ENCODE measurements at regions of chr3 and their contacts with region 1.

Region 1: DNA sequence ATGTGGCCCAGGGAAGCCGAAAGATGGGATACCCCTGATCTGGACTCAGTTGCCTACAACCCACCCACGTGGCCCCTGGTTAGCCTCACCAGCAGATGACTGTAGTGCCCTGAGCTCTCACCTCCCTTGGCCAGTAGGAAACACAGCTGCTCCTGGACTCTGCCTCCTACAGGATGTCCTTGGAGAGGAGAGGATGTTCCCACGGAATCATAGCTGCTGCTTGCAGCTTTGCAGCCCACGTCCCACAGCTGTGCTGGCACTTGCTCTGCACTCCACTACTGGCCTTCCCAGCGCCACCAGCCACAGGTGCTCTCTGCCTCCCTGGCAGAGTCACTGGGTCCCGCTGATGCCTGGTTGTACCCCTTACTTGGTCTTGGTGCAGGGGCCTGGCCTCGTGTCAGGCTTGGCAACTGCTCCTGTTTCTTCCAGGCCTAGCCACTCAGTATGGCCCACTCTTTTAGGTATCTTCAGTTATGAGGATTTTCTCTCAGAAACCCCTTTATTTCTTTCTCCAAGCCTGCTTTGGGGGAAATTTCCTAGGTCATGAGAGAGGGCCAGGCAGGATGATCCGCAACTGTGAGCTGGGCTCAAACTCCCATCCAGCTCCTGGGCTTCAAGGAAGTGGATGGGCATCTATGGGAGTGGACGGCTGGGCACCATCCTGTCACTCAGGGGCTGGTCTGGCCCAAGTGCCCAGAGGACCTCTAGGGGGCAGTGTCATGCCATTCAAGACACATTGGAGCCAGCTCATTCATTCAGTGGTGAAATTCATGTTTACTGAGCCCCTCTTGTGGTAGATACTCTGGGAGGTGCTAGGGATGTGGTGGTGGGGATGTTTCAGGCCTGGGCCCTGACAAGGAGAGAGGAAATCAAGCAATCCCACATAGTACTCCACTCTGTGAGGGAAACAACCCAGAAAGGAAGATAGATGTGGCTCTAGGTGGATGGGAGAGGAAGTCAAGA is 16.2 kb upstream of the VILL start:
- DNase-seq: no peak
- ATAC-seq: peak; percentile 99
- H3K4me3 ChIP-seq: no peak overlapping the region
- H3K27ac ChIP-seq: no peak overlapping the region
- H3K4me1 ChIP-seq: no peaks in the 10 kb centered on the region
- H3K27me3 ChIP-seq: no peaks in the 10 kb centered on the region
- CTCF ChIP-seq: peak; percentile 88 to 92 (median 90); a peak in 5 of 6 replicates
- EP300 ChIP-seq: no peak
- POLR2A ChIP-seq: no peak
- RAD21 ChIP-seq: peak; percentile 69

Region 2: GRCh38 chr3:37855363-37855970 is 118.9 kb before region 1 on chr3:
- CTCF ChIA-PET with region 1: interaction called, 16 read pairs
- POLR2A ChIA-PET with region 1: no interaction called
- RAD21 ChIA-PET with region 1: interaction called, 4 read pairs
- SMC1A ChIA-PET with region 1: interaction called, 8 read pairs
- in situ Hi-C with region 1: no loop called
- intact Hi-C with region 1: no loop called
- DNase-seq: peak; percentile 5
- ATAC-seq: peak; percentile 91
- H3K4me3 ChIP-seq: no peak overlapping the region
- H3K27ac ChIP-seq: no peak overlapping the region
- H3K4me1 ChIP-seq: no peaks in the 10 kb centered on the region
- H3K27me3 ChIP-seq: peaks cover 0 to 4% of the 10 kb centered on the region in 2 experiments; a peak in 2 of 4 replicates
- CTCF ChIP-seq: peak; percentile 89 to 98 (median 89)
- EP300 ChIP-seq: no peak
- POLR2A ChIP-seq: no peak
- RAD21 ChIP-seq: peak; percentile 94

Region 3: GRCh38 chr3:37986479-37987314 is 12.3 kb after region 1 on chr3:
- CTCF ChIA-PET with region 1: interaction called, 12 read pairs
- POLR2A ChIA-PET with region 1: no interaction called
- RAD21 ChIA-PET with region 1: no interaction called
- SMC1A ChIA-PET with region 1: interaction called, 5 read pairs
- in situ Hi-C with region 1: no loop called
- intact Hi-C with region 1: no loop called
- DNase-seq: no peak
- ATAC-seq: no peak
- H3K4me3 ChIP-seq: no peak overlapping the region
- H3K27ac ChIP-seq: no peak overlapping the region
- H3K4me1 ChIP-seq: no peaks in the 10 kb centered on the region
- H3K27me3 ChIP-seq: no peaks in the 10 kb centered on the region; a peak in 1 of 4 replicates
- CTCF ChIP-seq: no peak
- EP300 ChIP-seq: no peak
- POLR2A ChIP-seq: no peak
- RAD21 ChIP-seq: no peak

Region 4: DNA sequence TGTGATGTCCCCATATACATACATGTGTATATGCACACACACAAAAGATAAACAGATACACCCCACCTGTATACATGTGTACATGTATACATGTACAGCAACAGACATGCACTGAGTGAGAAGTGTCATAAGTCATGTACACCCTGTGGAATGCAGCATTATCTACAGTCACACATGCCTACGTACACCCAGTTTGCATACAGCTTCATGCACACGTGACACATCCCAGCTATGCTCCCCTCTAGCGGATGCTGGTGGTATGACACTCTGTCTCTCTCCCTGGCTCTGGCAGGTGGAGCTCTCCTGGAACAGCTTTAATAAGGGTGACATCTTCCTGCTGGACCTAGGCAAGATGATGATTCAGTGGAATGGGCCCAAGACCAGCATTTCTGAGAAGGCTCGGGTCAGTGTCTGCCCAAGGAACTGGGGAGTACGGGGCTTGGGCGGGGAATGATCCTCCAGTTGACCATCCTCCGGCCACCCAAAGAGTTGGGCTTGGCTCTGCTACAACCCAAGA is 22.4 kb after region 1 on chr3:
- CTCF ChIA-PET with region 1: interaction called, 6 read pairs
- POLR2A ChIA-PET with region 1: interaction called, 4 read pairs
- RAD21 ChIA-PET with region 1: interaction called, 9 read pairs
- SMC1A ChIA-PET with region 1: interaction called, 10 read pairs
- in situ Hi-C with region 1: no loop called
- intact Hi-C with region 1: loop called (anchors 2 kb)
- DNase-seq: peak; percentile 74
- ATAC-seq: peak; percentile 63
- H3K4me3 ChIP-seq: no peak overlapping the region
- H3K27ac ChIP-seq: no peak overlapping the region
- H3K4me1 ChIP-seq: peaks cover 17% of the 10 kb centered on the region
- H3K27me3 ChIP-seq: no peaks in the 10 kb centered on the region
- CTCF ChIP-seq: peak; percentile 93 to 99 (median 97)
- EP300 ChIP-seq: no peak
- POLR2A ChIP-seq: 0 out of 2 replicates have a peak, but pooled peaks have one; percentile 20
- RAD21 ChIP-seq: peak; percentile 39; the same call in 1 of the 2 replicates

Region 5: DNA sequence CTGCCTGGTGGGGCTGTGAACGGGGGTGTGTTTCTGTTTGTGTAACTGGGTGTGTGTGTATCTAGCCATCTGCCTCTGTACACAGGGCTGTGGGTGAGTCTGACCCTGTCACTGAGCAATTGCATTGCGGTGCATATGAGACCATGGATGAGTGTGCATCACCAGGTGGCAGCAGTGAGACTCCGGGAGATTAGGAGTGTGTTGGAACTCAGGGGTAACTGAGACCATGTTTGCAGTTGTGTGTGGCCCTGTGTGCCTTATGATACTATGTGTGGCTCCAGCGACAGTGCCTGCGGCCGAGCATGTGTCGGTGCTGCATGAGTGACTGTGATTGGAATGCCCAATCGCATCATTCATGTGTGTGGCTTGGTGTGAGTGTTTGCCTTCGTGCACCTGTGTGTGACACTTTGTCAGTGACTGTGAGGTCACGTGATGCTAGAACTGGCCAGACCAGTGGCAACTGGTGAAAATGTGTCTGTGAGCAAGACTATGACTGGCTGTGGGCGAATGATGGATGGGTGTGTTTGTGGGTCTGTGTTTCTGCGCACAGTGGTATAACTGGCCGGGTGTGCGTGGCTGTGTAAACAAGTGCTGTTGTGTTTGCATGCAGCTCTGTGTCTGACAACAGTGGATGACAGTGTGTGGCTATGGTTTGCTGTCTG is 30.1 kb after region 1 on chr3:
- CTCF ChIA-PET with region 1: interaction called, 18 read pairs
- POLR2A ChIA-PET with region 1: no interaction called
- RAD21 ChIA-PET with region 1: interaction called, 9 read pairs
- SMC1A ChIA-PET with region 1: interaction called, 7 read pairs
- in situ Hi-C with region 1: no loop called
- intact Hi-C with region 1: loop called (anchors 1 kb)
- DNase-seq: no peak
- ATAC-seq: peak; percentile 85
- H3K4me3 ChIP-seq: no peak overlapping the region
- H3K27ac ChIP-seq: no peak overlapping the region
- H3K4me1 ChIP-seq: no peaks in the 10 kb centered on the region; the same call in 1 of the 2 replicates
- H3K27me3 ChIP-seq: no peaks in the 10 kb centered on the region
- CTCF ChIP-seq: peak; percentile 68 to 76 (median 73)
- EP300 ChIP-seq: no peak
- POLR2A ChIP-seq: no peak
- RAD21 ChIP-seq: peak; percentile 39; the same call in 1 of the 2 replicates

Region 6: DNA sequence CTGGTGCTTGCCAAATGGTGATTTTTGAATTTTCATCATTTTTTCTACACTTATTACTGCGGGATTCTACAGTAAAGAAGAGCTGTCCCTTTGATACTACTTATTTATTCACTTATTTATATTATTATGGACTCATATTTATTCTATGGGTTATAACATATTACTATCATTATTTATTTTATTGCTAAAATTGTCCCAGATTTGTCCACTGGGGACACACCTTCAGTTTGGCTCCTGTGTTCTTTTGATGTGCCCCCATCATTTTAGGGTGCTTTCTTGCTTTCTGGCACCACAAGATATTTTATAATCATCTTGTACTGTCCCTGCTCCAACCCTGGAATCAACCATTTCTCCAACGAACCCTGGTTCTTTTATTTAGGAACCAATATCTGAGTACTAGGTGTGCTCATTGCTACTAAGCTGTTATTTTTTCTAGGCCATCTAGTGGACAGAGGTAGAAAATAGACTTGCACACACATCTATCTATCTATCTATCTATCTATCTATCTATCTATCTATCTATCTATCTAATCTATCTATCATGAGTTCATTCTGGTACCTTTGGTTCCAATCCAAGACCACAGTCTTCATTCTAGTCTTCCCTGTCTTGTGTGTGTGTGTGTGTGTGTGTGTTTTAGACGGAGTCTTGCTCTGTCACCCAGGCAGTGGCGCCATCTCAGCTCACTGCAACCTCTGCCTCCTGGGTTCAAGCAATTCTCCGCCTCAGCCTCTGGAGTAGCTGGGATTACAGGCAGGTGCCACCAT is 323.7 kb after region 1 on chr3:
- CTCF ChIA-PET with region 1: interaction called, 13 read pairs
- POLR2A ChIA-PET with region 1: no interaction called
- RAD21 ChIA-PET with region 1: no interaction called
- SMC1A ChIA-PET with region 1: no interaction called
- in situ Hi-C with region 1: no loop called
- intact Hi-C with region 1: loop called (anchors 10 kb)
- DNase-seq: peak; percentile 5
- ATAC-seq: peak; percentile 83
- H3K4me3 ChIP-seq: no peak overlapping the region
- H3K27ac ChIP-seq: no peak overlapping the region
- H3K4me1 ChIP-seq: no peaks in the 10 kb centered on the region
- H3K27me3 ChIP-seq: no peaks in the 10 kb centered on the region
- CTCF ChIP-seq: peak; percentile 23 to 40 (median 28); a peak in 3 of 6 replicates
- EP300 ChIP-seq: no peak
- POLR2A ChIP-seq: no peak
- RAD21 ChIP-seq: peak; percentile 35

Region 7: GRCh38 chr3:39189959-39190269 is 1215.5 kb after region 1 on chr3:
- CTCF ChIA-PET with region 1: no interaction called
- POLR2A ChIA-PET with region 1: no interaction called
- RAD21 ChIA-PET with region 1: no interaction called
- SMC1A ChIA-PET with region 1: no interaction called
- in situ Hi-C with region 1: no loop called
- intact Hi-C with region 1: no loop called
- DNase-seq: peak; percentile 35
- ATAC-seq: peak; percentile 83
- H3K4me3 ChIP-seq: no peak overlapping the region
- H3K27ac ChIP-seq: no peak overlapping the region
- H3K4me1 ChIP-seq: peaks cover 3% of the 10 kb centered on the region
- H3K27me3 ChIP-seq: no peaks in the 10 kb centered on the region
- CTCF ChIP-seq: peak; percentile 69 to 86 (median 82)
- EP300 ChIP-seq: no peak
- POLR2A ChIP-seq: no peak
- RAD21 ChIP-seq: peak; percentile 91

Measured in GM12878 (cell line).